ENCODE measurements at regions of chr10 and their contacts with region 1.

Region 1: DNA sequence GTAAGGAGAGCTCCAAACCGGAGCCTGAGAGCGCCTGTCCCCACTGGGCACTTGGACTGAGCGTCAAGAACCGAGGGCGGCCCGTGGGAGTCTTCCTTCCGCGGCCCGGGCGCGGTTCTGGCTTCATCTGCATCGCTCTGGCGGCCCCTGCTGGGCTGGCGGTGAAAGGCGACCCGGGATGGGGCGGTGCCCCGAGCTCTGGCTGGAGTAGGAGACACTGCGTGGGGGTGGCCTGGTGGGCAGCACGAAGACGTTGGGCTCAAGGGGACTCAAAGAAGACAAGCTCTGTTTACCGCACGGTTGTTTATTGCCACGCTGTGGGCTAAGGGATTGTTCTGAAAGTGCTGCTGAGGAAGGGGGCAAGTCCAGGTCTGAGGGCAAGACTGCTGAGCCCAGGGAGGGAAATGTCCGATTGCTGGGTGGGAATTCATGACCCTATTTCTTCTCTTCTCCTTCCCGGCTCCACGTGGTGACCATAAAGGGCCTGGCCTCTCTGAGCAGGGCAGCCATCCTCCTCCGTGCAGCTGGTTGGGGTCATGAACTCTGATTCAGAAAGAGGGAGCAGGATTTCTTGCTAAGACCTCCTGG is 29.8 kb downstream of the PLAU start:
- DNase-seq: no peak
- H3K4me3 ChIP-seq: no peak overlapping the region; the same call in 1 of the 2 replicates
- CTCF ChIP-seq: peak; percentile 99

Region 2: GRCh38 chr10:73848821-73849489 is 91.8 kb before region 1 on chr10:
- CTCF ChIA-PET with region 1: interaction called, 142 read pairs
- POLR2A ChIA-PET with region 1: no interaction called
- DNase-seq: peak; percentile 16
- H3K4me3 ChIP-seq: no peak overlapping the region
- CTCF ChIP-seq: peak; percentile 96

Region 3: DNA sequence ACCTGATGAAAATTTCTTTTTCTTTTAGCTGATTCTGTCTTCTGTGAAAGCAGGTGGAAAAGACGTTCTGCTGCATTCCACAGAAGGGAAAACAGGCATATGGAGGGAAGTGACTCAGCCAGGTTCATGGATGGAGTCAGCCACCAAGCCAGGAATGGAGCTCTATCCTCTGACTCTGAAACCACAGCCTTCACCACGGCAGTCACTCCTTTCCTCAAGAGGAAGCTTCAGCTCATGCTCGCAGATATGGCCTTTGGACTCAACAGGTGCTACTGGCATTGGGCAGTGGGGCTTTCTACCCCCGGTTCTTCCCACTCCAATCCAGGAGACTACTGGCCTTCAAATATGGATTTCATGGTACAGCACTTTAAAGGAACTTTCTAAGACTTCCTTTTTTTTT is 41.3 kb before region 1 on chr10:
- CTCF ChIA-PET with region 1: interaction called, 806 read pairs
- POLR2A ChIA-PET with region 1: interaction called, 3 read pairs
- DNase-seq: no peak
- H3K4me3 ChIP-seq: no peak overlapping the region
- CTCF ChIP-seq: no peak

Region 4: GRCh38 chr10:73920089-73920488 is 20.6 kb before region 1 on chr10:
- CTCF ChIA-PET with region 1: interaction called, 145 read pairs
- POLR2A ChIA-PET with region 1: interaction called, 3 read pairs
- DNase-seq: no peak
- H3K4me3 ChIP-seq: no peak overlapping the region
- CTCF ChIP-seq: no peak

Region 5: GRCh38 chr10:73965890-73966768 is 25.4 kb after region 1 on chr10:
- CTCF ChIA-PET with region 1: interaction called, 12 read pairs
- POLR2A ChIA-PET with region 1: interaction called, 3 read pairs
- DNase-seq: peak; percentile 98
- H3K4me3 ChIP-seq: peak overlapping the region; percentile 12
- CTCF ChIP-seq: no peak